Left cardiac atrium (tissue), 4 donors: ENCODE measurements at regions of chr7 and their contacts with region 1.

Region 1: DNA sequence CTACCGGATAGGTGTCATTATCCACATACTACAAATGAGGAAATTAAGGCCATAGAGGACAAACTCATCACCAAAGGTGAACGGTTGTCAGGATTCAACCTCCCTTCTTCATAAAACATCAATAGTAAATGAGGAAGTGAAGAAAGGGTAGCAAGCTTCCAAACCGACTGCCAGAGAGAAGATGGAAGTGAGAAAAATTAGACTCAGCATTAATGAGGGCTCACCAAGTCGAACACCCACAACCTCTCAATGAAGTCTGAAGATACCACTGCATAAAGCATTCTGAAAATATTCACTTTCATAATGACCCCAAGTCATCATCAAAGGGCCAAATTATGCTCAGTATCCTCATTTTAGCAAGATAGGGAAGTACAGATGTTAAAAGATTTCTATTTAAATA is 29.6 kb downstream of the ABCB4 start:
- DNase-seq: no peak
- ATAC-seq: no peak

Region 2: DNA sequence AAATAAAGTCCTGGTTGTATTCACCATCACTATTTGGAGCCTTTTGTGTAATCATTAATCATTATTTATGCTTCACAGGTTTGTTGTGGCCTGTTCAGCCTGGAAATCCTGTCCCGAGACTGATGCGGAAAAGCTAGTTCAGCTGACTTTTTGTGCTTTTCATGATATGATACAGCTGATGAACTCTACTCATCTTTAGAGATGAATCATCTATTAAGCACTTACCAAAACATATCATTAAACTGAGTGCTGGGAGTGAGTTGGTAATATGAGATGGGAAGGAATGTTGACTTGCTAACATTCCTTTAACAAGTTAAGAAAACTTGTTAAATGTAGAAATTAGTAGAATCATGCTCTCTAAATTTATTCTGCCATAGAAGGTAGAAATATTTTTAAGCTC is 47.5 kb before region 1 on chr7:
- intact Hi-C with region 1: loop called in 1 of 2 experiments (anchors 5 kb)
- DNase-seq: no peak
- ATAC-seq: peak in 1 of 2 donors; percentile 18

Region 3: GRCh38 chr7:88146616-88147015 is 700.7 kb after region 1 on chr7:
- intact Hi-C with region 1: no loop called
- DNase-seq: no peak
- ATAC-seq: peak; percentile 49 to 55